Stomach (tissue), 19 donors: ENCODE measurements at regions of chr6 and their contacts with region 1.

Region 1: DNA sequence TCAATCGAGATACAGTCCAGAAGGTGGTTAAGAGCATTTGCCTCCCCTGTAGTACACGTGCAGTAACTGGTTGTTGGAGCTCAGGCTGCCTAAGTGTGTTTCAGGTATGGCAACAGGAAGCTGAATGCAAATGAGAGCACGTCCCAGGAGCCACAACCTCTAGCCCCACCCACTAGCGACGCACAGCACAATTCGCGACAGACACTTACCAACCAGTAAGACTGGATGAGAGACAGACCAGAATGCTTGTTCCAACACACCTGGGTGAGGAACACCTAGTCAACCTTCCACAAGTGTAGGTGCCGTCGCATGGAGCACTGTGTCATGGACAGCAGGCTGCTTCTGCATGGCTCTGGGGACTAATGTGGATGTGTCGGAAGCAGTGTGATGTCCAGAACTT is 7.2 kb upstream of the SERPINB1 start:
- DNase-seq: peak; percentile 49 to 76
- H3K4me3 ChIP-seq: no peak overlapping the region
- H3K27ac ChIP-seq: no peak overlapping the region
- H3K4me1 ChIP-seq: peaks cover 0 to 51% (median 20%) of the 10 kb centered on the region in 4 donors
- H3K27me3 ChIP-seq: no peaks in the 10 kb centered on the region
- CTCF ChIP-seq: no peak
- EP300 ChIP-seq: no peak
- POLR2A ChIP-seq: no peak

Region 2: GRCh38 chr6:2695454-2696095 is 153.3 kb before region 1 on chr6:
- intact Hi-C with region 1: no loop called
- DNase-seq: peak in 1 of 2 donors; percentile 61
- H3K4me3 ChIP-seq: no peak overlapping the region
- H3K27ac ChIP-seq: no peak overlapping the region
- H3K4me1 ChIP-seq: no peaks in the 10 kb centered on the region
- H3K27me3 ChIP-seq: no peaks in the 10 kb centered on the region
- CTCF ChIP-seq: peak in 2 of 7 experiments; percentile 9 to 10
- EP300 ChIP-seq: no peak
- POLR2A ChIP-seq: no peak

Region 3: DNA sequence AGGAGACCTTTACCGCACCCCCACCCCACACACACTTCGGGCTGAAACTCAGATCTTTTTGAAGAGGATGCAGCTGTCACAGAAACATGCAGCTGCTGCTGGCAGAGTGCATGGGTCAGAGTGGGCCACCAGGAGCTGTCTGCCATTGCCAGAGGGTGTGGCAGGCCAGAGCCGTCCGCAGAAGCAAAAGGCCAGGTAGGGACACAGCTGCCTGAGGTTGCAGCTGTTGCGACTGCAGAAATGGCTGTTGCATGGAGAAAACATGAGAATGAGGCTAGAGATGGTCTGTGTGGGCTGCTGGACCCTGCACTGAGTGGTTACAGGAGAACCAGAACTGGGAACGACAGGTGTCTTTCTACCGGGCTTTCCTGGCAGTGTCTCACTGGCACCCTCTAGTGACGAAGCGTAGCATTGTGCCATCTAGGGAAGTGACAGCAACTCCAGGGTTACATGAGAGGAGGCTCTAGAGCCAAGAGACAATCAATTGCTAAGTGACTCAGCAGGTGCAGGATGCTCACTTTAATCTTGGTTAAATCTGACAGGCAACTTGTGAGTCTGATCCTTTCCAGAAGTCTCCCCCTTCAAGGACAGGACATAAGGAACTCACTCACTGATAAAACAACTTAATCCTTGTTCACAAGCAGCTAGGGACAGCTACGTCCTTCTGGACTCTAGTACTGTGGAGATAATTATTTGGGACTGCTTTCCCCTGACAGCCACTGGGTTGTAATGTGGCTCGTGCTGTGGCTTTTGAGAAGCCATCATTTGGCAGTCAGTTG is 83.3 kb after region 1 on chr6:
- intact Hi-C with region 1: loop called (anchors 5 kb)
- DNase-seq: peak; percentile 90 to 92
- H3K4me3 ChIP-seq: peak overlapping the region in 3 of 4 donors; percentile 2 to 22 (median 14)
- H3K27ac ChIP-seq: no peak overlapping the region
- H3K4me1 ChIP-seq: peaks cover 4 to 8% (median 7%) of the 10 kb centered on the region in 4 donors
- H3K27me3 ChIP-seq: no peaks in the 10 kb centered on the region
- CTCF ChIP-seq: peak in 5 of 7 experiments; percentile 90 to 94 (median 91)
- EP300 ChIP-seq: no peak
- POLR2A ChIP-seq: no peak